ENCODE measurements at regions of chr2 and their contacts with region 1.

Region 1: DNA sequence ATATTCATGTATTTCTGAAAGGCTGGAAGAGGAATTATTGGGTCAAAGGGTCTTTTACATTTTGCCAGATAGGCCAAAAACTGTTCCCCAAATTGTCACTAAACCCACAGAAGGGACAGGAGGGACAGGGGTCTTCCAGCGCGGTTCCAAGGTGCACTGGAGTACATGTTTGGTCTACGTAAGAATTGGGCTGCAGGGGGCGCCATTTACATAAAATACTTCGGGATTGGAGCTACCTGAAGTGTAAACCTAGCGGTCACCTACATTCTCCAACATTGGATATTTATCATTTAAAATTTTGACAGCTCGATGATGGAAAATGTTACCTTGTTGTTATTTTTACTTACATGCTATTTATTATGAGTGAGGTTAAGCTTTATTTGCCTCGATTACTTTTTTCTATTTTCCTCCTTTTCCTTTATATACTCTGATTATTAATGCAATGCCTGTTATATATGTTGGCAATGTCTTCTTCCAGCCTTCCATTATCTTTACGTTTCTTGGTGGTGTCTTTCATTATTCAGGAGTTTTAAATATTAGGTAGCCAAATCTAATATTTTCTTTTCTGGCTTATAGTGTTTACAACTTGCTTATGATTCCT is 43.0 kb upstream of the RAB6C start:
- DNase-seq: peak in 3 of 10 donors; percentile 66 to 74 (median 69)

Region 2: GRCh38 chr2:129646107-129646506 is 290.3 kb before region 1 on chr2:
- intact Hi-C with region 1: no loop called
- DNase-seq: no peak

Region 3: DNA sequence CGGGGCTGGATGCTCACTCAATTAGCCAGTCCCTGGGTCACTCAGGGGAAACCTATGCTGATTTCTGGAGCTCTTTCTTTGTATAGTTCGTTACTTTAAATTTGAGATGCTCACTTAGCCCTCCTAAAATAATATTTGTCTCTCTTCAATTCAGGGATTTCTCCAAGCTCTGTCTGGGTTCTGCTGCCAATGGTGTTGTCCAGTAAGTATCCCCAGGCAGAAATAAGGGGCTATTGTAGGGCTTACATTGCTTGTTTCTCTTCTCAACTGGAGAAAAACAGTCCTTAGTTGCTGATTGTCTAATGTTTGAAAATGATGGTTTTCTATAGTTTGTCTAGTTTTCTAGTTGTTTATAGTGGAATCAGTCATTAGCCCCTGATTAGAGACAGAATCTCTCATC is 48.0 kb after region 1 on chr2:
- intact Hi-C with region 1: loop called (anchors 10 kb)
- DNase-seq: no peak

Region 4: GRCh38 chr2:130332271-130333073 is 396.0 kb after region 1 on chr2:
- intact Hi-C with region 1: loop called (anchors 2 kb)
- DNase-seq: peak in 9 of 10 donors; percentile 31 to 95 (median 77)

Measured in posterior cingulate gyrus (tissue), 11 donors.